GM12878 (cell line): ENCODE measurements at regions of chr5 and their contacts with region 1.

Region 1: GRCh38 chr5:139633295-139634027 is 14.7 kb upstream of the CXXC5 start:
- DNase-seq: no peak
- ATAC-seq: peak; percentile 44
- H3K4me3 ChIP-seq: no peak overlapping the region
- H3K27ac ChIP-seq: no peak overlapping the region
- H3K4me1 ChIP-seq: peaks cover 55% of the 10 kb centered on the region
- H3K27me3 ChIP-seq: no peaks in the 10 kb centered on the region
- CTCF ChIP-seq: peak; percentile 99; a peak in 5 of 6 replicates
- EP300 ChIP-seq: no peak
- POLR2A ChIP-seq: peak; percentile 72
- RAD21 ChIP-seq: peak; percentile 91

Region 2: DNA sequence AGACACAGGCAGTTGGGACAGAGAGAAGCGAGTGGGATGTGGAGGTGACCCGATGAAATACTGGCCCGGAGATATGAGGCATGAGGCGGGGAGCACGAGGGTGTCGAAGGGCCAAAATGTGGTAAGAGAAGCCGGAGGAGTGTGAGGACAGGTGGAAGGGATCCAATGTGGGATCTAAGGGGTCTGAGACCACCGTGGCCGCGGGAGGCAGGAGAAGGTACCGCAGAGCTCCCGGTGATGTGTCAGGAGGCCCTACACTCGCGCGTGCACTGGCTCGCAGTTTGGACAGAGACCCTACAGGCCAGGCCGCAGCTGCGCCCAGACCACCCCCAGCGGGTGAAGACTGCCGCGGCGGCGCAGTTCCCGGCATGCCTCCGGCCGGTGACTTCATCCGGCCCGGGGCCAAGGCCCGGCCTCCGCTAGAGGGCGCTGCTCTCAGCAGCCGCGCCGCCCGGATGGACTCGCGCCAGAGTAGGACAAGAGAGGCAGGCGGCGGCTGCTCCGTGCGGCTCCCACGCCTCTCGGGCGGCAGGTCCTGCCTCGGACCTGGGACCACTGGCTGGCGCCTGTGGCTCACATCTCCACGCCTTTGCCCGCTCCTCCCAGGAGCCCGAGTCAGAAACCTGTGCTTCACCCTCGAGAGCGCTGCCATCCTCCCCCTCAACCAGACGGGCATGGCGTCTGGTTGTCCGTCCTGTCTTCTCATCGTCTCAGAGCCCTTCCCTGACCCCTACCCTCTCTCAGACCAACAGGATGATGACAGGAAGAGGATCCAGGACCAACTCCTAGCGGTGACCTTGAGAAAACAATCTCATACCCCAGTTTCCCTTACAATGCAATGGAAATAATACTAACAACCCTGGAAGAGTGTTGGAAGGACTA is 115.5 kb before region 1 on chr5:
- CTCF ChIA-PET with region 1: interaction called, 45 read pairs
- POLR2A ChIA-PET with region 1: no interaction called
- RAD21 ChIA-PET with region 1: interaction called, 19 read pairs
- SMC1A ChIA-PET with region 1: interaction called, 7 read pairs
- in situ Hi-C with region 1: no loop called
- intact Hi-C with region 1: no loop called
- DNase-seq: no peak
- ATAC-seq: peak; percentile 92
- H3K4me3 ChIP-seq: peak overlapping the region; percentile 66
- H3K27ac ChIP-seq: peak overlapping the region; percentile 69
- H3K4me1 ChIP-seq: peaks cover 19% of the 10 kb centered on the region
- H3K27me3 ChIP-seq: no peaks in the 10 kb centered on the region
- CTCF ChIP-seq: peak; percentile 96 to 99 (median 97); a peak in 5 of 6 replicates
- EP300 ChIP-seq: no peak
- POLR2A ChIP-seq: peak; percentile 96
- RAD21 ChIP-seq: peak; percentile 74

Region 3: DNA sequence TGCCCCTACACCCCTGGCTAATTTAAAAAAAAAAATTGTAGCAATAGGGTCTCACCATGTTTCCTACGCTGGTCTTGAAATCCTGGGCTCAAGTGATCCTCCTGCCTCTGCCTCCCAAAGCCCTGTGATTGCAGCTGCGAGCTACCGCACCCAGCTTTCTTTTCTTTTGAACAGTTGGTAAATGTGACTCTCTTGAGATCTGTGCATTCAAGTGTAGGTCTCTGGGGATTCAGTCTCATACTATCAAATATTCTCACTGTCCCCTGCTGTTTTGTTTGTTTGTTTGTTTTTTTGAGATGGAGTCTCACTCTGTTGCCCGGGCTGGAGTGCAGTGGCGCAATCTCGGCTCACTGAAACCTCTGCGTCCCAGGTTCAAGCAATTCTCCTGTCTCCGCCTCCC is 27.6 kb before region 1 on chr5:
- CTCF ChIA-PET with region 1: interaction called, 20 read pairs
- POLR2A ChIA-PET with region 1: interaction called, 3 read pairs
- RAD21 ChIA-PET with region 1: interaction called, 12 read pairs
- SMC1A ChIA-PET with region 1: interaction called, 5 read pairs
- in situ Hi-C with region 1: no loop called
- intact Hi-C with region 1: no loop called
- DNase-seq: peak; percentile 28
- ATAC-seq: peak; percentile 80
- H3K4me3 ChIP-seq: no peak overlapping the region
- H3K27ac ChIP-seq: peak overlapping the region; percentile 31; the same call in 1 of the 2 replicates
- H3K4me1 ChIP-seq: peaks cover 10% of the 10 kb centered on the region; the same call in 1 of the 2 replicates
- H3K27me3 ChIP-seq: no peaks in the 10 kb centered on the region
- CTCF ChIP-seq: no peak
- EP300 ChIP-seq: no peak
- POLR2A ChIP-seq: no peak
- RAD21 ChIP-seq: no peak

Region 4: DNA sequence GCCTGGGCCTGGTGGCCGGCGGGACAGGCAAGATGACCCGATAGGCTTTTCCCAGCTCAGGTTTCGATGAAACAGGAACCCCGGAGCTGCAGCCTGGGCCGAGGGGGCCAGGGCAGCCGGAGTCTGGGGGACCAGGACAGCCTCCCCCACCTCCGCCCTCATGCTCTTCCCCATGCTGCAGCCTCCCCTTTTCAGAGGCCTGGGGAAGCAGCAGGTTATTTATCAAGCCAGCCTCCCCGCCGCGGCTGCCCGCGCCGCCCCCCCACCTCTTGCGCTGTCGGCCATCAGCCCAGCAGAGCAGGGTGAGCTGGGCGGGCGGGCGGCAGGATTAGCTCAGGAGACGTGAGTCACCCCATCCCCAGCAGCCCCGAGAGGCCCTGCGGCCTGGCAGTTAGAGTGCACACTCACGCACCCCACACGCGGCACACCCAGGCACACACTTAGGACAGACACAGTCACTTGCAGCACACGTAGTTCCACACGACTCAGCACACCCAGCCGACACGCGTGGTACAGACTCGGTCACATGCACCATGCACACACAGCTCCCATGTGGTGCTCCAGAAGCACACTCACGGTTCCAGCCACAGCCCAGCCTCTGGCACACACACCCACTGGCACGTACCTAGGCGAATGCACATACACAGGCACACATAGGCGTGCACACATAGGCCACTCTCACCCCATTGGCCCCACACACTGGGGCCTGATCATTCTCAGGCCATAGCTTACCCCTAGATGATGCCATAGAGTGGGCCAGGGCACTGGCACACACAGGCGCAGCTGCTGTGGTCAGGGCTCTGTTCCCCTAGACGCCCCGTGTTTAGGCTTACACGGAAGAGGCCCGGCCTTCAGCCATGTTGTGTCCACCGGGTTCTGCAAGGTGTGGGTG is 27.7 kb after region 1 on chr5:
- CTCF ChIA-PET with region 1: interaction called, 186 read pairs
- POLR2A ChIA-PET with region 1: interaction called, 163 read pairs
- RAD21 ChIA-PET with region 1: interaction called, 265 read pairs
- SMC1A ChIA-PET with region 1: interaction called, 100 read pairs
- in situ Hi-C with region 1: no loop called
- intact Hi-C with region 1: no loop called
- DNase-seq: no peak
- ATAC-seq: peak; percentile 46
- H3K4me3 ChIP-seq: peak overlapping the region; percentile 14; the same call in 1 of the 2 replicates
- H3K27ac ChIP-seq: peak overlapping the region; percentile 67
- H3K4me1 ChIP-seq: peaks cover 97% of the 10 kb centered on the region
- H3K27me3 ChIP-seq: no peaks in the 10 kb centered on the region
- CTCF ChIP-seq: no peak
- EP300 ChIP-seq: no peak
- POLR2A ChIP-seq: no peak
- RAD21 ChIP-seq: no peak

Region 5: GRCh38 chr5:139696894-139697658 is 63.6 kb after region 1 on chr5:
- CTCF ChIA-PET with region 1: interaction called, 335 read pairs
- POLR2A ChIA-PET with region 1: interaction called, 10 read pairs
- RAD21 ChIA-PET with region 1: interaction called, 241 read pairs
- SMC1A ChIA-PET with region 1: interaction called, 212 read pairs
- in situ Hi-C with region 1: loop called (anchors 5 kb)
- intact Hi-C with region 1: no loop called
- DNase-seq: no peak
- ATAC-seq: peak; percentile 46
- H3K4me3 ChIP-seq: 0 out of 2 replicates have a peak overlapping the region, but pooled peaks have one; percentile 17
- H3K27ac ChIP-seq: no peak overlapping the region
- H3K4me1 ChIP-seq: peaks cover 12% of the 10 kb centered on the region
- H3K27me3 ChIP-seq: peaks cover 0 to 3% of the 10 kb centered on the region in 2 experiments; a peak in 2 of 4 replicates
- CTCF ChIP-seq: no peak
- EP300 ChIP-seq: no peak
- POLR2A ChIP-seq: no peak
- RAD21 ChIP-seq: no peak

Region 6: GRCh38 chr5:139755892-139756671 is 122.6 kb after region 1 on chr5:
- CTCF ChIA-PET with region 1: interaction called, 11 read pairs
- POLR2A ChIA-PET with region 1: interaction called, 8 read pairs
- RAD21 ChIA-PET with region 1: interaction called, 4 read pairs
- SMC1A ChIA-PET with region 1: interaction called, 166 read pairs
- in situ Hi-C with region 1: loop called (anchors 5 kb)
- intact Hi-C with region 1: no loop called
- DNase-seq: no peak
- ATAC-seq: peak; percentile 80
- H3K4me3 ChIP-seq: peak overlapping the region; percentile 49; the same call in 1 of the 2 replicates
- H3K27ac ChIP-seq: no peak overlapping the region
- H3K4me1 ChIP-seq: no peaks in the 10 kb centered on the region; the same call in 1 of the 2 replicates
- H3K27me3 ChIP-seq: peaks cover 4 to 13% of the 10 kb centered on the region in 2 experiments; a peak in 3 of 4 replicates
- CTCF ChIP-seq: no peak
- EP300 ChIP-seq: no peak
- POLR2A ChIP-seq: no peak
- RAD21 ChIP-seq: no peak

Region 7: DNA sequence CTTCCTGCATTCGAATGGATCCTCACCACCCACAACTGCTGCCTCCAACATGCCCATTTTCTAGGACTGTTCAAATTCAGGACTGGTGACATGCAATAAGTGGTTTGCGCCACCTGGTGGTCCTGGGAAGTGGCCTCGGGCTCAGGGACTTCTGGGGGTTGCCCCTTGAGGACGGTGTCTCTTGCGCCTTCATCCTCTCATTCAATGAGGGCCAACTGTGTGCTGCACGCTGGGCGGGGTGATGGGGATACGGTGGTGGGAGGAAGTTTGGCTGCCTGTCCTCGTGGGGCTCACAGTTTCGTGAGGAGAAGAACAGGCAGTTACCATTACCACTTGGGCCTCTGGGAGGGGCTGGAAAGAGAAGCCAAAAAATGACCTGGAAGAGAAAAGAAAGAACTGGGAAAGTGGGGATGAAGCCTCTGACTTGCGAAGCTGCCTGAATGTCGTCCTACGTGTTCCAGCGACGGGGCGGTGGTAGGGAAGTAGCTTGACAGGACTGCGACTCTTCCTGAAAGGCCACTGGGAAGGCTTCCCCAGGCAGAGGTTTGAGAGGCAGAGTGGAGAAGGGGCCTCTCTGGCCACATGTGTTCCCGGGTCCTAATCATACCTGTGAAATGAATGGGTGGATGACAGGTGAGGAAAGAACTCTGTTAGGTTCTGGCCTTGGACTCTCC is 211.1 kb after region 1 on chr5:
- CTCF ChIA-PET with region 1: no interaction called
- POLR2A ChIA-PET with region 1: no interaction called
- RAD21 ChIA-PET with region 1: interaction called, 3 read pairs
- SMC1A ChIA-PET with region 1: interaction called, 3 read pairs
- in situ Hi-C with region 1: no loop called
- intact Hi-C with region 1: loop called (anchors 5 kb)
- DNase-seq: peak; percentile 23
- ATAC-seq: peak; percentile 82
- H3K4me3 ChIP-seq: no peak overlapping the region
- H3K27ac ChIP-seq: no peak overlapping the region
- H3K4me1 ChIP-seq: peaks cover 12% of the 10 kb centered on the region
- H3K27me3 ChIP-seq: no peaks in the 10 kb centered on the region; a peak in 1 of 4 replicates
- CTCF ChIP-seq: peak; percentile 85 to 93 (median 89)
- EP300 ChIP-seq: no peak
- POLR2A ChIP-seq: no peak
- RAD21 ChIP-seq: peak; percentile 82